AG04449 (cell line): ENCODE measurements at regions of chr12 and their contacts with region 1.

Region 1: GRCh38 chr12:92570056-92570753 is 132.6 kb upstream of the PLEKHG7 start:
- DNase-seq: peak; percentile 38
- H3K4me3 ChIP-seq: no peak overlapping the region
- CTCF ChIP-seq: peak; percentile 48

Region 2: DNA sequence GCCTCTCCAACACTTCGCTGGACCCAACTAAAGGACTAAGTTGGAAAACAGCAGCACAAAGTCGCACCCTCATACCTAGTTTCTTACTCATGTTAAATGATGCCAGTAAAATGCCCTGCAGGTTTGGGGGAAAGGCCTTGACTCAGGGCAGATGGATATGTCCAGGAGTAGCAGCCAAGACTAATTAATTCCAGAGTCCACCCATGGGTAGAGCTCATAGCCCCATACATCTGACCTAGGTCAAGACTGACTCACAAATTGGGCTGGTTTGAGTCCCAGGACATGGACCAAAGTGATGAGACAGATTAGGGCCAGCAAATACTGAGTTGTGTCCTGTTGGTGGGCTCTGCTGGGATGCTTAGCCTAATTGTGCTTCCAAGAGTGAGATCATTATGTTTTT is 200.6 kb before region 1 on chr12:
- CTCF ChIA-PET with region 1: no interaction called
- POLR2A ChIA-PET with region 1: no interaction called
- DNase-seq: no peak
- H3K4me3 ChIP-seq: no peak overlapping the region
- CTCF ChIP-seq: no peak

Region 3: GRCh38 chr12:92537290-92537960 is 32.8 kb before region 1 on chr12:
- CTCF ChIA-PET with region 1: no interaction called
- POLR2A ChIA-PET with region 1: no interaction called
- DNase-seq: no peak
- H3K4me3 ChIP-seq: no peak overlapping the region
- CTCF ChIP-seq: no peak

Region 4: DNA sequence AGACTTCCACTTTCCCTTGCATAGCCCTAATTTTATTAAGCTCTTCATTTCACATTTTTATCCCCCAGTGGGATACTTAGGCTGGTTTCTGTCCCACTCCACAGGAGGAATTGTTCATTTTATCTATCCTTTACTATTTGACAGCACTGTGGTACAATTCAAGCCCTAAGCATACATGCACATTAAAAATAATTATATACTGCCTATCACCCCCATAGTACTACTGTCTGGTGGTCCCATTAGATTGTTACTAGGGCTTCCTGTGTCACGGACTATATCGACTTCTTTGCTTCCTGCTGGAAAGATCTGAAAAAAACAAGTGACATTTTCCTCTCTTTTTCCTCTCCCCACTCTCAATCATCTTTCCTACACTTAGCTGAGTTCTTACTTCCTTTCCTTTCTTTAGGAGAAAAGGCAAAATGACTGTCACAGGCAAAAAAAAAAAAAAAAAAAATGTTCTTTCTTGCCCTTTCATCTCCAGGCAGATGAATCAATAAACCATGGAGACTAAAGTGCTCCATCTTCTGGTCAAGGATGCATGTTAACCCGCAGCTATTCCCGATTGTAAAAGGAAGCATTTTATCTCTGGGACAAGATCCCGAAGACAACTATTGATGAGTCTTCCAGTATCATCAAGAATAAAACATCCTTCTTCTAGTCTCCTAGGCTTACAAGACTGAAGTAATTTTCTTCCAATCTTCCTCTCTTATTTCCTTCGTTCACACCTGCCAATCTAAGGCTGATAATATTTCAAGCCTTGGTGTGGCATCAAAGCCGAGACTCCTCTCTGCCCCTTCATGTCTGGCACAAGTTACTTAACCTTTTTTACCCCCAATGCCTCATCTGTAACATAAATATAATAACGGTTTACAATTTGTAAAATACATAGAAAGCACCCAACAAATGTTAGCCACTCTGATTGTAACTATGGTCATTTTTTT is 38.2 kb after region 1 on chr12:
- CTCF ChIA-PET with region 1: interaction called, 13 read pairs
- POLR2A ChIA-PET with region 1: no interaction called
- DNase-seq: no peak
- H3K4me3 ChIP-seq: no peak overlapping the region
- CTCF ChIP-seq: peak; percentile 51

Region 5: DNA sequence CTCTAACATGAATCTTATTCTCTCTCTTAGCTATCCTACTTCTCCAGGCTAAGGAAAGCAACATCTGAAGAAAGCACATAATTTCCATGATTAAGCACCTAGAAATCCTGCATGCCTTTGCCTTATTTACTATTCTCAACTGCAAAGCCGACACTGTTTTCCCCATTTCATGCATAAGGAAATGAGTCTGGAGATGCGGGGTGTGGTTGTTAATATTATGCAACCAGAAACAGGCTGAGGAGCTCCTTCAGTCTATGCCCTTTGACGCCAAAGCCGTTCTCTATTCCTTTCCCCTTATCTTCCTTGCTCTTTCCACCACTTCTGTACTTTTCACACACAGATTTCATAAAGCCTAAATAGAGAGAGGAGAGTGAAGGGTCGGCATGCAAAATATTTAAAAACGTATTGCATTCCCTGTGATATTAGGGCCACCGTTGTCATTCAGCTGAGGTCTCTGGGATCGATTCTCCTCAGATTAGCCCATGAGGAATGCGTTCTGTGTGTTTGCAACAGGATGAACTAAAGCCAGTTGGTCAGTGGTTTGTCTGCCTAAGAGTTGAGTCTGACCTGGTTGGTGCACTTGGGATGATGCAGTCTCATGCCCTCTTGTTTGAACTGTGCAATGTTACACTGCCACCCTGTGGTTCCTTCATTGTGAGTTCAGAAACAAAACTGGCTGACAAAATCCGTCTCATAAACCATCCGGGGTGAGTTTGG is 79.5 kb after region 1 on chr12:
- CTCF ChIA-PET with region 1: interaction called, 19 read pairs
- POLR2A ChIA-PET with region 1: no interaction called
- DNase-seq: peak; percentile 60
- H3K4me3 ChIP-seq: no peak overlapping the region
- CTCF ChIP-seq: peak; percentile 74